Activated CD4-positive, alpha-beta T cell treated with anti-CD3 and anti-CD28 coated beads, Interleukin-2, amount 10 ng/mL, durations not matched to agents 24 days and 14 days (primary cell): ENCODE measurements at regions of chr17 and their contacts with region 1.

Region 1: GRCh38 chr17:63478791-63479494 is 2.1 kb downstream of the ACE start:
- DNase-seq: peak; percentile 94
- H3K4me3 Mint-ChIP-seq: no peak overlapping the region
- H3K27ac Mint-ChIP-seq: no peak overlapping the region
- H3K4me1 Mint-ChIP-seq: peaks cover 16% of the 10 kb centered on the region
- H3K27me3 Mint-ChIP-seq: peaks cover 38% of the 10 kb centered on the region

Region 2: GRCh38 chr17:63425482-63425881 is 53.5 kb before region 1 on chr17:
- intact Hi-C with region 1: loop called (anchors 1 kb)
- DNase-seq: peak; percentile 93
- H3K4me3 Mint-ChIP-seq: no peak overlapping the region
- H3K27ac Mint-ChIP-seq: no peak overlapping the region
- H3K4me1 Mint-ChIP-seq: peaks cover 40% of the 10 kb centered on the region
- H3K27me3 Mint-ChIP-seq: peaks cover 2% of the 10 kb centered on the region